ENCODE measurements at regions of chr10 and their contacts with region 1.

Region 1: DNA sequence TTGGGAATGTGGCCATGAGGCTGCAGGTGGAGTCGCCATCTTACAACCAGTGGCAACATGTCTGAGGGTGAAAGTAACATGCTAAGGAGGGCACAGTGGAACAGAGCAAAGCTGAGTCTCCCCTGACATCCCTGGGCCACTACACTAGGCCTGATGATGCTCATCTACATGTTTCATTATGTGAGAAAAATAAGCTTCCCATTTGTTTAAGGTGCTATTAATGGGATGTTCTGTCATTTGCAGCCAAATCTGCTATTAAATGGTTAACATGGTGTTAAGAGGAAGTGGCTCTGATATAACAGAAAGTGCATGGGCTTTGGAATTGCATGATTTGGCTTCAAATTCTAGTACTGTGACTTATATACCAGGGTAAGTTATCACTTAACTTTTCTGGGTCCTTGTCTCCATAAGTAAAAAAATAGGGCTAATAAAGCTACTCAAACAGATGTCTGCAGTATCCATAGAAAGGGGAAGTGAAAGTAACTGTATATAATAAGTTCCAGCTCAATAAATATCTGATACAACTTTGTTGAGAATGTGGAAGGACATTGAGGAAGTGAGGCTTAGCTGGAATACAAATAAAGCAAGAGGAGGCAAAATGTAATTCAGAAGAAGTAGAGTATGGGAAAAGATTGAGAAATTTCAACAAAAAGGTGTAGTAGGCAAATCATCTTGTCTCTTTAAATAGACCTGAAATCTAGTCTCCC is 158.9 kb downstream of the RTKN2 start:
- DNase-seq: no peak
- H3K4me3 ChIP-seq: no peak overlapping the region
- H3K27ac ChIP-seq: peak overlapping the region; percentile 49
- H3K4me1 ChIP-seq: peaks cover 80% of the 10 kb centered on the region
- H3K27me3 ChIP-seq: no peaks in the 10 kb centered on the region
- CTCF ChIP-seq: no peak

Region 2: GRCh38 chr10:62050893-62051433 is 58.8 kb before region 1 on chr10:
- CTCF ChIA-PET with region 1: no interaction called
- POLR2A ChIA-PET with region 1: interaction called, 4 read pairs
- intact Hi-C with region 1: loop called (anchors 2 kb)
- DNase-seq: peak; percentile 43 to 83
- H3K4me3 ChIP-seq: no peak overlapping the region
- H3K27ac ChIP-seq: no peak overlapping the region
- H3K4me1 ChIP-seq: peaks cover 54% of the 10 kb centered on the region
- H3K27me3 ChIP-seq: no peaks in the 10 kb centered on the region
- CTCF ChIP-seq: no peak

Region 3: DNA sequence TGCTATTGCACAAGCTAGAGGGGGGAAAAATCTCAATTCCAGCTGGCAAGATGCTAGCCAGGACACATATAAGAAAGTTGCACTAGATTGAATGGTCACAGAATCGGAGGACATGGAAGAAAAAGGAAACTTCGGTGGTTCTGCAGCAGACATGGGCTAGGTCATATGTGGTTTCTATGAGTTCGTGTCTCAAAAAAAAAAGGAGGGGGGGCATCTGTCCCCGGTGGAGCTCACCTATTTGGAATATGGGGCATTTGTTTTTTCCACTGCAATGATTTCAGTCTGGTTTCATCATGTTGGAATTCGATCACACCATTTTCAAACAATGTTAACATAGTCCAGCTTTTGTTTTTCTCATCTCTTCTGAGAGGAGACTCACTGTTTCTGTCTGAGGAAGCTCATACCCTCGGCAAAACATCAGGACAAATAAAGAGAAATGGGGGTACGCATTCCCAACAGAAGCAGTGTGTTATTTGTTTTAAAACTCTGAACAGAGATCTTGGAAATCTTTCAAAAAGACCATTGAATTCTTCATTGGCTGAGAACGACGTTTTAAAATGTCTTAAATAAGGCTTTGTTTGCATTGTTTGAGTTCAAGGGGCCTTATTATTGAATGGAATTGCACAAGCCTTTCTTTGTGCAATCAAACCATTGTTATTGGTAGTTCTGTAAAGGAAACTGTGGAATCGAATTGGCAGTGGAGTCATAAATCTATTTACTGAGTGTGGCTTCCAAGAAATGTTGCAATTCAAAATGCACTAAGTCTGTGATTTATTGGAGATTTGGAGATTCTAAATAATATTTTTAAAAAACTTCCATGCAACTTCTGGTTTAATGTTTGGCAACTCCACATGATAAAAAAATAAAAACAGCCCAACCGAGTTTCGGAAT is 14.3 kb before region 1 on chr10:
- CTCF ChIA-PET with region 1: interaction called, 3 read pairs
- POLR2A ChIA-PET with region 1: no interaction called
- intact Hi-C with region 1: loop called (anchors 1 kb)
- DNase-seq: peak in 1 of 2 experiments; percentile 56
- H3K4me3 ChIP-seq: 0 out of 2 replicates have a peak overlapping the region, but pooled peaks have one; percentile 1
- H3K27ac ChIP-seq: peak overlapping the region; percentile 62
- H3K4me1 ChIP-seq: peaks cover 53% of the 10 kb centered on the region
- H3K27me3 ChIP-seq: no peaks in the 10 kb centered on the region
- CTCF ChIP-seq: no peak

Region 4: DNA sequence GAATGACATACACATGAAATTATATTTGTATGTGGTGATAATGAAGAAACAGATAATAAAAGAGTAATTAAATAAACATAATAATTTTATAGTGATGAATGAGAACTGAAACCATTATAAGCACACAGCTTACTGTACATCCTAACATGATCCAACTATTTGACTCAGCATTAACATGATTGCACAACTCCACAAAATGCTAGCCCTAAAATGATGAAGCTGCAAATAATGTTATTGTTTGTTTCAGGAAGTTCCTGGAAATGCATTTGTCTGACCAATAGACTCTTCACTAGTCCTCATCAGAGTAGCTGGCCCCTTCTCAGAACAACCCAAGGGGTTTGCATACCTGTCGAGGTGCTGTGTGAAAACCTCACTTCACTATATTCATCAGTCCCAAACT is 43.5 kb after region 1 on chr10:
- CTCF ChIA-PET with region 1: no interaction called
- POLR2A ChIA-PET with region 1: no interaction called
- intact Hi-C with region 1: no loop called
- DNase-seq: peak in 1 of 2 experiments; percentile 42
- H3K4me3 ChIP-seq: no peak overlapping the region
- H3K27ac ChIP-seq: no peak overlapping the region
- H3K4me1 ChIP-seq: no peaks in the 10 kb centered on the region
- H3K27me3 ChIP-seq: no peaks in the 10 kb centered on the region
- CTCF ChIP-seq: no peak

Measured in PC-9 (cell line).